Heart left ventricle (tissue), 16 donors: ENCODE measurements at regions of chrX and their contacts with region 1.

Region 1: GRCh38 chrX:15471016-15471415 is 22.1 kb downstream of the PIR start:
- DNase-seq: peak; percentile 39 to 59 (median 51)
- ATAC-seq: peak; percentile 26 to 86 (median 76)
- H3K4me3 ChIP-seq: no peak overlapping the region
- H3K27ac ChIP-seq: no peak overlapping the region
- H3K4me1 ChIP-seq: peaks cover 0 to 19% (median 0%) of the 10 kb centered on the region in 12 donors
- H3K27me3 ChIP-seq: peaks cover 0 to 37% (median 0%) of the 10 kb centered on the region in 9 donors
- CTCF ChIP-seq: peak; percentile 56 to 84 (median 70)
- POLR2A ChIP-seq: no peak

Region 2: GRCh38 chrX:15254852-15255251 is 216.2 kb before region 1 on chrX:
- intact Hi-C with region 1: no loop called
- DNase-seq: no peak
- ATAC-seq: no peak
- H3K4me3 ChIP-seq: no peak overlapping the region
- H3K27ac ChIP-seq: no peak overlapping the region
- H3K4me1 ChIP-seq: no peaks in the 10 kb centered on the region
- H3K27me3 ChIP-seq: peaks cover 0 to 3% (median 0%) of the 10 kb centered on the region in 9 donors
- CTCF ChIP-seq: no peak
- POLR2A ChIP-seq: no peak

Region 3: GRCh38 chrX:15299941-15300851 is 170.8 kb before region 1 on chrX:
- intact Hi-C with region 1: loop called in 3 of 10 experiments (anchors 2 to 5 kb)
- DNase-seq: no peak
- ATAC-seq: no peak
- H3K4me3 ChIP-seq: peak overlapping the region in 3 of 12 donors; percentile 3 to 13 (median 6)
- H3K27ac ChIP-seq: peak overlapping the region in 10 of 12 donors; percentile 38 to 82 (median 79)
- H3K4me1 ChIP-seq: peaks cover 0 to 39% (median 14%) of the 10 kb centered on the region in 12 donors
- H3K27me3 ChIP-seq: no peaks in the 10 kb centered on the region
- CTCF ChIP-seq: peak; percentile 17 to 58 (median 42)
- POLR2A ChIP-seq: no peak

Region 4: DNA sequence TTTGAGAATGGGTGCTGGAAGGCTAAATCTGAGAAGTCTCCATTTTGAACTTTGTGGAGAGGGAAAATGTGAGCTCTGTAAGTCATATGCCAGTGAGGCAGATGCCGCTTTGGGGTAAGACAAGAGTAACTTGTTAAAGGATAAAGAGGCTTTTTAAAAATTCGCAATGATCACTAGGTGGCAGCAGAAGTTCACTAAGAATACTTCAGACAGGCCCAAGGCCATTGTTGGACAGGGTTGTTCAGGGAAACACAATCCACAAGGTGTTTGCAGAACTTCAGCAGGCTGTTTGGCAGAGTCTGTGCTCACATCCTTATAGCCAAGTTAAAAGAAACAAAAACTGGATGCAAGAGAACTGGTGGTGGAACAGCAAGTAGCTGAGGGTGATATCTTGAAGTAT is 122.0 kb before region 1 on chrX:
- intact Hi-C with region 1: loop called (anchors 1 to 5 kb)
- DNase-seq: peak in 4 of 5 donors; percentile 18 to 34 (median 27)
- ATAC-seq: peak; percentile 76 to 88 (median 82)
- H3K4me3 ChIP-seq: no peak overlapping the region
- H3K27ac ChIP-seq: no peak overlapping the region
- H3K4me1 ChIP-seq: no peaks in the 10 kb centered on the region
- H3K27me3 ChIP-seq: peaks cover 0 to 10% (median 0%) of the 10 kb centered on the region in 9 donors
- CTCF ChIP-seq: peak; percentile 33 to 61 (median 49)
- POLR2A ChIP-seq: no peak

Region 5: DNA sequence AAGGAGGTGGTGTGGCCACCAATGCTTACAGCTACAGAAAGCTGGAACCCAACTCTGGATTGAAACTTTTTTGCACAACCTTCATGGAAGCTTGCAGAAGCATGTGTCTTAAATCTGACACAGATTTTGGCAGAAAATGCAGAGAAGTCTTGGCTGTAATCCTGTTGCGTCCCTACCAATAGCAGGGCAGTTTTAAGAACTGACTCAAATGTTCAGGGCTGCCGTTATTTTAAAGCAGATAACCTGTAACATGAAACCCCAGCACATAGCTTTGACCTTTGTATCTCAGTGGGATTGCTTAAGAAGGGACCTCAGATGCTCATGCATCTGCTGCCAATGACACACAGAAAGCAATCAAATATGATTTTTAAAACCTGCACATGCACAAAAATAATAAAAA is 86.7 kb before region 1 on chrX and contains the start of gene VEGFD:
- intact Hi-C with region 1: loop called in 1 of 10 experiments (anchors 10 kb)
- DNase-seq: no peak
- ATAC-seq: peak in 2 of 4 donors; percentile 42 to 63
- H3K4me3 ChIP-seq: peak within 1 kb of the TSS in 4 of 12 donors; percentile 10 to 32 (median 30)
- H3K27ac ChIP-seq: peak within 1 kb of the TSS in 2 of 12 donors; percentile 20 to 26
- H3K4me1 ChIP-seq: no peaks in the 10 kb centered on the region
- H3K27me3 ChIP-seq: peaks cover 0 to 8% (median 0%) of the 10 kb centered on the region in 9 donors
- CTCF ChIP-seq: no peak
- POLR2A ChIP-seq: no peak
- total RNA-seq, gene VEGFD: 1.6 to 20.3 (median 3.6) TPM

Region 6: GRCh38 chrX:15500497-15500966 is 29.5 kb after region 1 on chrX and contains the start of gene BMX:
- intact Hi-C with region 1: no loop called
- DNase-seq: peak in 3 of 5 donors; percentile 30 to 33 (median 32)
- ATAC-seq: peak; percentile 51 to 86 (median 64)
- H3K4me3 ChIP-seq: peak within 1 kb of the TSS in 8 of 12 donors; percentile 14 to 37 (median 29)
- H3K27ac ChIP-seq: peak within 1 kb of the TSS in 8 of 12 donors; percentile 1 to 64 (median 46)
- H3K4me1 ChIP-seq: peaks cover 0 to 8% (median 0%) of the 10 kb centered on the region in 12 donors
- H3K27me3 ChIP-seq: peaks cover 0 to 35% (median 0%) of the 10 kb centered on the region in 9 donors
- CTCF ChIP-seq: no peak
- POLR2A ChIP-seq: no peak
- total RNA-seq, gene BMX: 0.47 to 2.8 (median 1.3) TPM

Region 7: DNA sequence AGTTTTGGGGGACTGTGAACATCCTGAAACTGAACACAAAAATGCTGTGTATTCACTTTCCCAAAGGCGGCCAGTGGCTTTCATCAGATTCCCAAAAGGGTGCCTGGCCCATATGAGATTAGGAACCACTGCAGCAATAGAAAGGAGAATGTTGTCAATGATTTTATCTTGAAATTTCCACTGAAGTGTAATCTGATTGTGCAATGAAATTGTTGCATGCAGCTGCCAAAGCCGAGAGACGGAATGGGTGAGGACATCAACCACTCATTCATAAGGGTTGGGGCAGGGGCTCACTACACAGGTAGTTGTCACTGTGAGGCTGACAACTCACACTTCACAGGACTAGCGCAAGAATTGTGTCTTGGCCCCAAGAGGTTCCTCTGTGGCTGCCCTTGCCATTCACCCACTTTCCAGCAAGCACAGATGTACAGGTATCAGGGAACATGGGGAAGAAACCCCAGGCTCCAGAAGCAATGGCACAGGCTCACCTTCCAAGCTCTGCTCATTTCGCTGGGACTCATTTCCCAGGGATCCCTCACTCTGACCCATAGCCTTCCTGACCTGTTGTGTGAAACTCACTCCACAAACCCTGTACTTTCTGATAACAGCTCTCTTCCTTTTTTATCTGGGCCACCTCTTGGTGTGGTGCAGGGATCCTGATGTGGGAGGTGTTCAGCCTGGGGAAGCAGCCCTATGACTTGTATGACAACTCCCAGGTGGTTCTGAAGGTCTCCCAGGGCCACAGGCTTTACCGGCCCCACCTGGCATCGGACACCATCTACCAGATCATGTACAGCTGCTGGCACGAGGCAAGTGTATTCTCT is 78.4 kb after region 1 on chrX:
- intact Hi-C with region 1: no loop called
- DNase-seq: no peak
- ATAC-seq: no peak
- H3K4me3 ChIP-seq: no peak overlapping the region
- H3K27ac ChIP-seq: no peak overlapping the region
- H3K4me1 ChIP-seq: no peaks in the 10 kb centered on the region
- H3K27me3 ChIP-seq: peaks cover 0 to 48% (median 0%) of the 10 kb centered on the region in 9 donors
- CTCF ChIP-seq: no peak
- POLR2A ChIP-seq: no peak

Region 8: GRCh38 chrX:15564981-15565579 is 94.1 kb after region 1 on chrX:
- intact Hi-C with region 1: loop called in 4 of 10 experiments (anchors 2 to 5 kb)
- DNase-seq: peak; percentile 33 to 54 (median 52)
- ATAC-seq: peak; percentile 58 to 95 (median 92)
- H3K4me3 ChIP-seq: no peak overlapping the region
- H3K27ac ChIP-seq: no peak overlapping the region
- H3K4me1 ChIP-seq: peaks cover 0 to 10% (median 0%) of the 10 kb centered on the region in 12 donors
- H3K27me3 ChIP-seq: peaks cover 0 to 64% (median 0%) of the 10 kb centered on the region in 9 donors
- CTCF ChIP-seq: peak; percentile 29 to 67 (median 57)
- POLR2A ChIP-seq: no peak